SK-N-SH (cell line): ENCODE measurements at regions of chr22 and their contacts with region 1.

Region 1: DNA sequence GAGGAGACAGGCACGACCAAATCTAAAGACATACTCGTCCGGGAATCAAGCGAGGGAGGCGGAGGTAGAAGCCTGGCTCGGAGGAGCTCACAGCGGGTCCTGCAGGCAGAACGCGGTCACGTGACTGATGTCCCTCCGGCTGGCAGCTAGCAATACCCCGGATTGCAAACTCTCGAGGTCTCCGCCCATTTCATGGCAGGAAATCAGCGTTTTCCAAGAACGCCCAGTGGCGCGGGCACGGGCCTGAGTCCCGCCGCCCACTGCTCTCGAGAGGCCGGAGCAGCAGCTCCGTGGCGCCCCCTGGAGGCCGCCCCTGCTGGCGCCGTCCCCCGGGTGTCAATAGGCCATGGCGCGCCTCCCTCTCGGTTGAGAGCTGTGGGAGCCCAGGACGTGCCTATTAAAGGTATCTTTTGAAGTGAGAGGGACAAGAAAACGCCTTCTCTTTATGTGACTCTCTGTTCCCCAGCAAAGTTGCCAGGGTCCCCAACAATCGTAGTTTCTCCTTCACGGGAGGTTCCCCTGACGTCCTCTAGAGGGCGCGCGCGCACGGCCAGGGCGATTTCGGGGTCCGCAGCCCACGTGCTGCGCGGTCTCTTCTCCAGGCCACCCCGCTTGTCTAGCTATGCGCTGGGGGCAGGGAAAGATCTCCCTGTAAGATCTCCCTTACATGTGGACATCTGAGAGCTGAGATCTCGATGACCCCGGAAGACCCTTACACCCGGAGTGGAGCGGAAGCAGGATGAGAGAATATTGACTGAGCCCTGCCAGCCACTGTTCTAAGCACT is 37.3 kb upstream of the RBFOX2 start:
- DNase-seq: peak; percentile 91
- H3K4me3 ChIP-seq: peak overlapping the region; percentile 47 to 63
- H3K27ac ChIP-seq: peak overlapping the region; percentile 62 to 92
- H3K4me1 ChIP-seq: peaks cover 4 to 20% of the 10 kb centered on the region in 2 experiments; a peak in 3 of 4 replicates
- H3K27me3 ChIP-seq: no peaks in the 10 kb centered on the region
- CTCF ChIP-seq: peak; percentile 100
- EP300 ChIP-seq: peak in 1 of 2 experiments; percentile 5; a peak in 1 of 4 replicates
- RAD21 ChIP-seq: peak; percentile 78

Region 2: GRCh38 chr22:35921777-35922176 is 144.2 kb before region 1 on chr22:
- CTCF ChIA-PET with region 1: interaction called, 64 read pairs
- POLR2A ChIA-PET with region 1: no interaction called
- DNase-seq: peak; percentile 49
- H3K4me3 ChIP-seq: no peak overlapping the region; a peak in 1 of 4 replicates
- H3K27ac ChIP-seq: peak overlapping the region; percentile 47 to 72; a peak in 3 of 4 replicates
- H3K4me1 ChIP-seq: peaks cover 36% of the 10 kb centered on the region in 2 experiments; a peak in 3 of 4 replicates
- H3K27me3 ChIP-seq: no peaks in the 10 kb centered on the region
- CTCF ChIP-seq: peak; percentile 73
- EP300 ChIP-seq: no peak
- RAD21 ChIP-seq: peak; percentile 90

Region 3: GRCh38 chr22:35955546-35955945 is 110.4 kb before region 1 on chr22:
- CTCF ChIA-PET with region 1: interaction called, 44 read pairs
- POLR2A ChIA-PET with region 1: no interaction called
- DNase-seq: no peak
- H3K4me3 ChIP-seq: no peak overlapping the region
- H3K27ac ChIP-seq: peak overlapping the region in 1 of 2 experiments; percentile 16; a peak in 1 of 4 replicates
- H3K4me1 ChIP-seq: peaks cover 28 to 34% of the 10 kb centered on the region in 2 experiments
- H3K27me3 ChIP-seq: no peaks in the 10 kb centered on the region
- CTCF ChIP-seq: no peak
- EP300 ChIP-seq: no peak
- RAD21 ChIP-seq: no peak

Region 4: DNA sequence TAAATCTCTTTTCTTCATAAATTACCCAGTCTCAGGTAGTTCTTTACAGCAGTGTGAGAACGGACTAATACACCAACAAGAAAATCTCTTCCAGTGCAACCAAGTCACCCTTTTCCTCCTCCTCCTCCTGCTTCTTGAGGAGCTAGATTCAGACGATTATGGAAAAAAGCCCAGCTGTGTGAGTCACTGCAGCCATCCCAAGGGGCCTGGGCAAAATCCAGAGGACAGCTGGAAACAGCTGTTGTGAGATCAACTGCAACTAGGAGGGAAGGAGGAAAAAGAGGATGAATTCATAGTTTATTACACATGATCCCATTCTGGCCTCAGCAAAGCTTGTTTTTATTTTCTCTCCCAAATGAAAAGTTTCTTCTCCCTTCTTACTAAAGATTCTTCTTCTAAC is 70.2 kb before region 1 on chr22:
- CTCF ChIA-PET with region 1: interaction called, 54 read pairs
- POLR2A ChIA-PET with region 1: no interaction called
- DNase-seq: no peak
- H3K4me3 ChIP-seq: no peak overlapping the region
- H3K27ac ChIP-seq: peak overlapping the region; percentile 62 to 83
- H3K4me1 ChIP-seq: peaks cover 12 to 32% of the 10 kb centered on the region in 2 experiments
- H3K27me3 ChIP-seq: no peaks in the 10 kb centered on the region
- CTCF ChIP-seq: no peak
- EP300 ChIP-seq: 0 out of 4 replicates have a peak, but pooled peaks of 1 of the 2 experiments have one; percentile 33
- RAD21 ChIP-seq: no peak

Region 5: DNA sequence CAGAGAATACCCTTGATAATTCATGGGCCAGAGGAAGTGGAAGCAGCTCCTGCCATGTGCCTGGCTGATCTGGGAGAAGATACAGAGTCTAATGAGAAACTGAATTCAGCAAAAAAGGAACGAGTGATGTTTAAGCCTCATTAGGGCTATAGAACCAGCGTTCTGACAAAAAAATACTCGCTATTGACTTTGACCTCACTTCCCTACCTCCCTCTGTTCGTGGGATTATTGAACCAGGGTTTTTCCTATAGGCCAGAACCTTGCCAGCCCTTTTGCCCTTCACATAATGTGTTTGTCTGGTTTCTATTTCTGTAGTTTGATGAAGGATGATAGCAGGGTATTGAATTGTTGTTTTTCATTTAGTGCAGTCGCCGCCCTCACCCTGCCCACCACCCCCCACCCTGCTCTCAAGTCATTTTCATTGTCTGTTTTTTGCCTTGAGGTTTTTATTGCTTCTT is 29.8 kb before region 1 on chr22:
- CTCF ChIA-PET with region 1: interaction called, 87 read pairs
- POLR2A ChIA-PET with region 1: interaction called, 27 read pairs
- DNase-seq: peak; percentile 69
- H3K4me3 ChIP-seq: no peak overlapping the region
- H3K27ac ChIP-seq: peak overlapping the region; percentile 37 to 98; a peak in 3 of 4 replicates
- H3K4me1 ChIP-seq: peaks cover 8 to 26% of the 10 kb centered on the region in 2 experiments; a peak in 3 of 4 replicates
- H3K27me3 ChIP-seq: no peaks in the 10 kb centered on the region
- CTCF ChIP-seq: no peak
- EP300 ChIP-seq: peak in 1 of 2 experiments; percentile 86; a peak in 2 of 4 replicates
- RAD21 ChIP-seq: peak; percentile 37

Region 6: GRCh38 chr22:36097880-36098279 is 31.9 kb after region 1 on chr22:
- CTCF ChIA-PET with region 1: interaction called, 14 read pairs
- POLR2A ChIA-PET with region 1: no interaction called
- DNase-seq: no peak
- H3K4me3 ChIP-seq: no peak overlapping the region
- H3K27ac ChIP-seq: no peak overlapping the region
- H3K4me1 ChIP-seq: no peaks in the 10 kb centered on the region
- H3K27me3 ChIP-seq: no peaks in the 10 kb centered on the region
- CTCF ChIP-seq: no peak
- EP300 ChIP-seq: no peak
- RAD21 ChIP-seq: no peak